PC-9 (cell line): ENCODE measurements at regions of chr19 and their contacts with region 1.

Region 1: GRCh38 chr19:10095948-10096621 is 6.4 kb downstream of the ANGPTL6 start:
- DNase-seq: peak; percentile 77 to 95
- H3K4me3 ChIP-seq: peak overlapping the region; percentile 56
- H3K27ac ChIP-seq: no peak overlapping the region
- H3K4me1 ChIP-seq: peaks cover 11% of the 10 kb centered on the region
- H3K27me3 ChIP-seq: no peaks in the 10 kb centered on the region
- CTCF ChIP-seq: no peak

Region 2: GRCh38 chr19:10120538-10121189 is 24.6 kb after region 1 on chr19:
- CTCF ChIA-PET with region 1: interaction called, 6 read pairs
- POLR2A ChIA-PET with region 1: interaction called, 10 read pairs
- intact Hi-C with region 1: no loop called
- DNase-seq: peak in 1 of 2 experiments; percentile 44
- H3K4me3 ChIP-seq: no peak overlapping the region
- H3K27ac ChIP-seq: no peak overlapping the region; the same call in 1 of the 2 replicates
- H3K4me1 ChIP-seq: peaks cover 8% of the 10 kb centered on the region; the same call in 1 of the 2 replicates
- H3K27me3 ChIP-seq: no peaks in the 10 kb centered on the region
- CTCF ChIP-seq: no peak

Region 3: DNA sequence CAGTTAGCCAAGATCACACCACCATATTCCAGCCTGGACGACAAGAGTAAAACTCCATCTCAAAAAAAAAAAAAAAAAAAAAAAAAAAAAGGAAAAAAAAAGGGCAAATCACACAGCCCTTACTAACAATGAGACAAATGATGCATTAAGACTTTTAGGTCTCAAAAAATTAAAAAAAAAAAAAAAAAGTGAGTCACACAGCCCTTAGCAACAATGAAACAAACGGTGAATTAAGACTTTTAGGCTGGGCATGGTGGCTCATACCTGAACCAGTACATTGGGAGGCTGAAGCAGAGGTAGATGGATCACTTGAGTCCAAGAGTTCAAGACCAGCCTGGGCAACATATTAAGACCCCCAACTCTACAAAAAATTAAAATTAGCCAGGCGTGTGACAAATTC is 56.0 kb after region 1 on chr19:
- CTCF ChIA-PET with region 1: interaction called, 10 read pairs
- POLR2A ChIA-PET with region 1: no interaction called
- intact Hi-C with region 1: no loop called
- DNase-seq: peak in 1 of 2 experiments; percentile 53
- H3K4me3 ChIP-seq: no peak overlapping the region
- H3K27ac ChIP-seq: no peak overlapping the region
- H3K4me1 ChIP-seq: no peaks in the 10 kb centered on the region
- H3K27me3 ChIP-seq: no peaks in the 10 kb centered on the region
- CTCF ChIP-seq: no peak

Region 4: GRCh38 chr19:10206226-10206885 is 110.3 kb after region 1 on chr19:
- CTCF ChIA-PET with region 1: no interaction called
- POLR2A ChIA-PET with region 1: interaction called, 17 read pairs
- intact Hi-C with region 1: no loop called
- DNase-seq: peak; percentile 89 to 91
- H3K4me3 ChIP-seq: no peak overlapping the region
- H3K27ac ChIP-seq: peak overlapping the region; percentile 67
- H3K4me1 ChIP-seq: peaks cover 45% of the 10 kb centered on the region
- H3K27me3 ChIP-seq: no peaks in the 10 kb centered on the region
- CTCF ChIP-seq: no peak